ENCODE measurements at regions of chr3 and their contacts with region 1.

Region 1: DNA sequence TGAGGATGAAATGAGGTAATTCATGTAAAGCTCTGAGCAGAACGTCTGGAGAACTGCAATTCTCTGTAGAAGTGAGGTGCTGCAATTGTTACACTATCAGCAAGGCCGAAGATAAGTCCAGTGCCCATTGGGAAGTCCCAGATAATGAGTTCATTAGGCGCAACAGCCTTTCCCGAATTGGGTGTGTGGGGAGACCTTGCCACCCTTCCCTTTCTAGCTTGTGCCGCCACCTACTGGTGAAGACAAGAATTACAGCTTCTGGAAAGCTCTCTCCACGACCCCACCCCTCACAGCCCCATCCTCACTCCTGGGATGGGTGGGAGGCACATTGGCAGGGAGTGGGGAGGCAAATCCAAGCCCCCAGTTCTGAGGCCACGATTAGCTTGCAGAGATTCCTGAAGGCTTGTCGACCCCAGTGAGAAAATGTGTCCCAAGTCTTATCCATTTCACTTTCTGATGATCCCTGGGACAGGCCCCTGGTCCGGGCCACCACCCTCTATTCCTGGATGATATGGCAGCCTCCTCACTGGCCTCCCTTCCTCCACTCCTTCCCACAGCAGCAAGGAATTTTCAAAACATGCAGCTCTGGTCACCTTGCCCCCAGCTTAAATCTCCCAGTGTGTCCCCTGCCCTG is 36.4 kb downstream of the FAM3D start:
- DNase-seq: peak; percentile 62
- H3K4me3 ChIP-seq: no peak overlapping the region
- H3K27ac ChIP-seq: peak overlapping the region; percentile 74
- H3K4me1 ChIP-seq: peaks cover 32% of the 10 kb centered on the region
- H3K27me3 ChIP-seq: no peaks in the 10 kb centered on the region
- CTCF ChIP-seq: peak; percentile 88 to 89
- POLR2A ChIP-seq: no peak

Region 2: GRCh38 chr3:58305882-58306711 is 324.1 kb before region 1 on chr3 and contains the starts of genes HTD2 and RPP14:
- CTCF ChIA-PET with region 1: interaction called, 11 read pairs
- POLR2A ChIA-PET with region 1: no interaction called
- dilution Hi-C with region 1: no loop called
- intact Hi-C with region 1: no loop called
- DNase-seq: peak; percentile 98
- H3K4me3 ChIP-seq: peak within 1 kb of the TSS; percentile 81 to 98 (median 94)
- H3K27ac ChIP-seq: peak within 1 kb of the TSS; percentile 96
- H3K4me1 ChIP-seq: peaks cover 19% of the 10 kb centered on the region
- H3K27me3 ChIP-seq: peaks cover 15 to 16% of the 10 kb centered on the region in 2 experiments
- CTCF ChIP-seq: peak; percentile 98
- POLR2A ChIP-seq: peak; percentile 92
- total RNA-seq, gene HTD2: 10.0 and 10.3 TPM in 2 replicates
- total RNA-seq, gene RPP14: 18.1 and 21.3 TPM in 2 replicates

Region 3: DNA sequence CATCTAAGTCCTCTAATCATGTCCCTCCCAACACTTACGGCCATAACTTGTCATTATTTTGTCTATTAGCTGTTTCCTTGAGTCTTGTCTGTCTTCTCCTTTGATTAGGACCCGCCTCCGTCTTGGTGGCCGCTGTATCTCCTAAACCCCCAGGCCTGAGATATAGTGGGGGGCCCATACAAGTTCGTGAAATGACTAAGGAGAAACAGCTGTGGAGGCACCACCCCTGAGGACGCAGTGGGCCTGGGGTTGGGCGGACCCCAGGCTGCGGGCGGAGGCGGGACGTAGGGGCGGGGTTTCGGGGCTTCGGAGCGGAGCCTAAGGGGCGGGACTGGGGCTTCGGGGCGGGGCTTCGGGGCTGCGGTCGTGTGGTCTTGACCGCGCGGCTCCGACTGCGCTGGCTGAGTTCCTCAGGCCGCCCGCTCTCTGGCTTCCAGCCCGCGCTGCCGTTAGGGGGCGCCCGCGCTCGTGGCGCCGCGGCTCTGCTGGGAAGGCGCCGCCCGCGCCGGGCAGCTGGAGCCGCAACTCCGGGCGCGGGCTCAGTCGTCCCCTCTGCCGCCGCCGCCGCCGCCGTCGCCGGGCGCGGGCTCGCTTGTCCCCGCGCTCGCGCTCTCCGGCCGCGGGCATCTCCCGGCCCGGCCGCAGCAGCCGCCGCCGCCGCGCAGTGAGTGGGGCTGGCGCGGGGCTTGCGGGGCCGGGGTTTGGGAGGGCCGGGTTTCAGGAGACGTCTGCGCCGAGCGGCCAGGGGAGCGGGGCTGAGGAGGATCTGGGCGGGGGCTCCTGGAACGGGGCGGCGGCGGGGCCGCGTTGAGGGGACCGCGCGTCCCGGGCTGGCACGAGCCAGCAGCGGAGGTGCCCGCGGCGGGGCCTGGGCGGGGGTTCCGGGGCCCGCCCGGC is 138.4 kb before region 1 on chr3 and contains the start of gene KCTD6:
- CTCF ChIA-PET with region 1: interaction called, 6 read pairs
- POLR2A ChIA-PET with region 1: no interaction called
- dilution Hi-C with region 1: no loop called
- intact Hi-C with region 1: loop called (anchors 1 kb)
- DNase-seq: peak; percentile 97
- H3K4me3 ChIP-seq: peak within 1 kb of the TSS; percentile 67 to 90 (median 86)
- H3K27ac ChIP-seq: peak within 1 kb of the TSS; percentile 21
- H3K4me1 ChIP-seq: peaks cover 16% of the 10 kb centered on the region
- H3K27me3 ChIP-seq: peaks cover 2 to 5% of the 10 kb centered on the region in 2 experiments
- CTCF ChIP-seq: peak; percentile 79 to 80
- POLR2A ChIP-seq: no peak
- total RNA-seq, gene KCTD6: 6.4 and 7.4 TPM in 2 replicates

Region 4: GRCh38 chr3:58560771-58561311 is 69.4 kb before region 1 on chr3:
- CTCF ChIA-PET with region 1: interaction called, 442 read pairs
- POLR2A ChIA-PET with region 1: no interaction called
- dilution Hi-C with region 1: no loop called
- intact Hi-C with region 1: loop called (anchors 1 kb)
- DNase-seq: peak; percentile 91
- H3K4me3 ChIP-seq: no peak overlapping the region
- H3K27ac ChIP-seq: peak overlapping the region; percentile 45
- H3K4me1 ChIP-seq: peaks cover 35% of the 10 kb centered on the region
- H3K27me3 ChIP-seq: no peaks in the 10 kb centered on the region
- CTCF ChIP-seq: peak; percentile 58 to 71
- POLR2A ChIP-seq: peak; percentile 40

Region 5: GRCh38 chr3:58577269-58577821 is 52.8 kb before region 1 on chr3 and contains the start of gene FAM107A:
- CTCF ChIA-PET with region 1: interaction called, 442 read pairs
- POLR2A ChIA-PET with region 1: no interaction called
- dilution Hi-C with region 1: no loop called
- intact Hi-C with region 1: loop called (anchors 1 kb)
- DNase-seq: peak; percentile 83
- H3K4me3 ChIP-seq: peak within 1 kb of the TSS in 2 of 3 experiments; percentile 15 to 70
- H3K27ac ChIP-seq: peak within 1 kb of the TSS; percentile 82
- H3K4me1 ChIP-seq: peaks cover 28% of the 10 kb centered on the region
- H3K27me3 ChIP-seq: no peaks in the 10 kb centered on the region
- CTCF ChIP-seq: peak; percentile 45 to 52
- POLR2A ChIP-seq: no peak
- total RNA-seq, gene FAM107A: 8.2 and 10.7 TPM in 2 replicates

Region 6: GRCh38 chr3:58617338-58617761 is 12.8 kb before region 1 on chr3:
- CTCF ChIA-PET with region 1: interaction called, 14 read pairs
- POLR2A ChIA-PET with region 1: no interaction called
- dilution Hi-C with region 1: no loop called
- intact Hi-C with region 1: no loop called
- DNase-seq: no peak
- H3K4me3 ChIP-seq: no peak overlapping the region
- H3K27ac ChIP-seq: no peak overlapping the region
- H3K4me1 ChIP-seq: no peaks in the 10 kb centered on the region
- H3K27me3 ChIP-seq: no peaks in the 10 kb centered on the region
- CTCF ChIP-seq: no peak
- POLR2A ChIP-seq: no peak

Region 7: DNA sequence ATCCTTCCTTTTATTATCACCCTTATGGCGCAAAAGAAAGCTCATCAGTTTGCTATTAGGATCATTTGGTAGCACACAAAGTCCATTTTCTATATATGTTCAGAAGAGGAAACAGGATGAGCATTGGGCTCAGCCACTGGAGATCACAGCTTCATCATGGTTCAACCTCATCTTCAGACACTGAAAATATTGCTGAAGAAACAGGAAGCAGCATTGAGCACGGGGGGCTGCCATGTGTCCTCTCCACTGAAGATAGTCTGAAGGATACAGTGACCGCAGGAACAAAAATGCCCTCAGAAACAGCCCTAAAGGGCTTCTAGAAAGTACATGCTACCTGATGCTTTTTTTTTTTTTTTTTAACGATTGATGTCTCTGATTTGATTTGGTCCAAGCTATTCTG is 1254.9 kb after region 1 on chr3:
- CTCF ChIA-PET with region 1: no interaction called
- POLR2A ChIA-PET with region 1: no interaction called
- dilution Hi-C with region 1: no loop called
- intact Hi-C with region 1: no loop called
- DNase-seq: no peak
- H3K4me3 ChIP-seq: no peak overlapping the region
- H3K27ac ChIP-seq: no peak overlapping the region
- H3K4me1 ChIP-seq: no peaks in the 10 kb centered on the region
- H3K27me3 ChIP-seq: no peaks in the 10 kb centered on the region
- CTCF ChIP-seq: no peak
- POLR2A ChIP-seq: no peak